Cardiac septum (tissue), 1 donor: ENCODE measurements at regions of chr21 and their contacts with region 1.

Region 1: DNA sequence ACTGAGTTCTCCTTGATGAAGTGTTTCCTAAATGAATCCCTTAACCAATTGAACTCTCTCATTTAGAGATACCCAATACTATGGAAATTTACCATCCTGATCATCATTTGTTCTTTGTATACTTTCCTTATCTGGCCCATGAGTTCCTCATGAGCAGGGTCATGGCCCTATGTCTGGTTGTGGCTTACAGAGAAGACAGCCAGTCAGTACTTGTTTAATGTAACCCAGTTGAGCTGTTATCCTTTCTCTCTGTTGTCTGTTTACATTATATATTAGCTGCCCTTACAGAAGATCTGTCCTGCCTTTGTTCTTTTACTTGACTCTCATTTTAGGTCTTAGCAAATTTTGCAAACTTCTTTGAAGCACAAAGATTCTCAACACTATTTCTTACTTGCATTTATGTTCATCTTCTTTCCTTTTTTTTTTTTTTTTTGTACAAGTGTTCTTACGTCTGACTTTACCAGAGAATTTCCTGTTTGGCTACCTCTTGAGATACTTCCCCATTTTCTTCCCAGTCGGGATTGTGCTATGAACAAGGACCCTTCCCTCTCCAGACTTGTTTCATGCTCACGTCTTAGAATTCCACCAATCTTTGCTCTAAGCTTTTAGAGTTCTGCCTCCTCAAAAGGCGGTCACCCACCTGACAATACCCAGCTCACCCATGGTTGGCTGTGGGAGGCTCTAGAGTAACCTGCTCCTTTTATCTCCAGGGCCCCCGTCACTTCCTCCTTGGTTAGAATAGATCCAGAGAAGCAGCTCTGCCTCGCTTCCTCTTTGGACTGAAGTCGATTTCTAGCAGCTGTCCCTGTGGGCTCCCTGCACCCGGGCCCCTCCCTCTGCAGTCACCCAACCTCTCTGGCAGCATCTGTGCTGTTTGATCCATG is 53.6 kb upstream of the RUNX1 start:
- DNase-seq: peak; percentile 81

Region 2: GRCh38 chr21:35051287-35051818 is 51.4 kb before region 1 on chr21:
- intact Hi-C with region 1: loop called (anchors 5 kb)
- DNase-seq: peak; percentile 93

Region 3: DNA sequence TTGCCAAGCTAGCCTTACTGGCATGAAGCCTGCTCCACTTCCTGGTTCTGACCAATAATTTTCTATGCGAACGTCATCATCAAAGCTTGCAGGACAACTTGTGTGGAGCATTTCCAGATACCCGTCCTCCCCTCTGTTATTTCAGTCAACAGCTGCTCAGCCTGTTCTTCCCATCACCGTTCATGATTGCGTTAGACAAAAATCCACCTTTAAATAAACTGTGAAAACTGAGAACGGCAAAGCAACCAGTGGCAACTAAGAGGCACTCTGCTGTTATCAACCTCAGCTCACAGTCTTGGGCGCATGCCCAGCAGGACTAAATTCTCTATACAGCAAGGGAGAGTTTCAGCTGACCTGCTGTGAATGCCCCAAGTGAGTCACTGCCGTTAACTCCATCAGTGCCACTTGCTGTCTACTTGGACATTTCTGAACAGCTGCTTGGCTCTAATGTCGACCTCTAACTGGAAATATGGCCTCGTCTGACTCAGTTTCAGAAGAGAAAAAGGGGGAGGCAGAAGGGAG is 153.8 kb after region 1 on chr21:
- intact Hi-C with region 1: loop called (anchors 1 kb)
- DNase-seq: peak; percentile 87